AG04450 (cell line): ENCODE measurements at regions of chr10 and their contacts with region 1.

Region 1: DNA sequence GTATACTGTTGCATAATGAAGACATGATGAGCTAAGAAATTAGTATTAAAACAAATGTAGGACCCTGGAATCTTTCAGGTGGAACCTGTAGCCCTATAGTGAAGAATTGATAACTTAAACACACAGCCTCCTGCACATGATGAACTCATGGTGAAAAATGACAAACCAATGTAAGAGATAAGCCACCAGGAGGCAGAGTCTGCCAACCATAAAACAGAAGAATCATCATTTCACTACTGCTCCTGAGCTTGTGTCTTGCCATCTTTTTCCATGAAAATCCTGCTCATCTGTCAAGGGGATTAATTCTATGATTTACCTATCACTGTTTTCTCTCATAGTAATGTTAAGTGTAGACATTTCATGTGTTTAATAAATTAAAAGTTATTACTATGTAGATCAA is 363.9 kb downstream of the MALRD1 start:
- DNase-seq: peak; percentile 10
- H3K4me3 ChIP-seq: no peak overlapping the region
- H3K27ac ChIP-seq: no peak overlapping the region
- H3K27me3 ChIP-seq: no peaks in the 10 kb centered on the region
- CTCF ChIP-seq: peak; percentile 65

Region 2: GRCh38 chr10:18689498-18689897 is 723.0 kb before region 1 on chr10:
- CTCF ChIA-PET with region 1: interaction called, 16 read pairs
- POLR2A ChIA-PET with region 1: no interaction called
- DNase-seq: no peak
- H3K4me3 ChIP-seq: no peak overlapping the region
- H3K27ac ChIP-seq: no peak overlapping the region
- H3K27me3 ChIP-seq: no peaks in the 10 kb centered on the region
- CTCF ChIP-seq: peak; percentile 54

Region 3: DNA sequence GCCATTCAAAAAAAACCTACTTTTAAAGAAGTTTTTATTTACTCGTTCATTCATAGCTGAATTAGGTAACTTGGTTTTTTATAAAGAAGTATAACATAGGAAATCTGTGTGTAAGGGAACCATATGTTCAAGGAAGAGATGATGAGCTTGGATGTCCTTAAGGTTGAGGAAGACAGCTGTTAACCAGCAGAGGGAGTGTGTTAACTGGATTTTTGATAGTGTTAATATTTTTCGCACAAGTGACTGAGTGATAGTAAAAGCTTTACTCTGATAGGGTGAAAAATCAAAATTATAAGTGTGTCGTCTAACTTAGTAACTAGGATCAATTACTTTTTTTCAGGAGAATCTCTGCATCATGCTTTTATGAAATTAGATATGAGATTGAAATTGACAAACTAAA is 618.6 kb before region 1 on chr10:
- CTCF ChIA-PET with region 1: interaction called, 15 read pairs
- POLR2A ChIA-PET with region 1: no interaction called
- DNase-seq: peak; percentile 8
- H3K4me3 ChIP-seq: no peak overlapping the region
- H3K27ac ChIP-seq: no peak overlapping the region
- H3K27me3 ChIP-seq: no peaks in the 10 kb centered on the region
- CTCF ChIP-seq: peak; percentile 73

Region 4: GRCh38 chr10:19541299-19541698 is 128.8 kb after region 1 on chr10:
- CTCF ChIA-PET with region 1: no interaction called
- POLR2A ChIA-PET with region 1: no interaction called
- DNase-seq: no peak
- H3K4me3 ChIP-seq: no peak overlapping the region
- H3K27ac ChIP-seq: no peak overlapping the region
- H3K27me3 ChIP-seq: no peaks in the 10 kb centered on the region
- CTCF ChIP-seq: no peak

Region 5: GRCh38 chr10:19616966-19617365 is 204.4 kb after region 1 on chr10:
- CTCF ChIA-PET with region 1: no interaction called
- POLR2A ChIA-PET with region 1: no interaction called
- DNase-seq: no peak
- H3K4me3 ChIP-seq: no peak overlapping the region
- H3K27ac ChIP-seq: no peak overlapping the region
- H3K27me3 ChIP-seq: no peaks in the 10 kb centered on the region
- CTCF ChIP-seq: no peak

Region 6: GRCh38 chr10:19629567-19629966 is 217.0 kb after region 1 on chr10:
- CTCF ChIA-PET with region 1: interaction called, 11 read pairs
- POLR2A ChIA-PET with region 1: no interaction called
- DNase-seq: no peak
- H3K4me3 ChIP-seq: no peak overlapping the region
- H3K27ac ChIP-seq: no peak overlapping the region
- H3K27me3 ChIP-seq: no peaks in the 10 kb centered on the region
- CTCF ChIP-seq: peak; percentile 32; the same call in 1 of the 2 replicates

Region 7: GRCh38 chr10:19788075-19788686 is 375.6 kb after region 1 on chr10:
- CTCF ChIA-PET with region 1: interaction called, 52 read pairs
- POLR2A ChIA-PET with region 1: no interaction called
- DNase-seq: peak; percentile 32
- H3K4me3 ChIP-seq: no peak overlapping the region
- H3K27ac ChIP-seq: no peak overlapping the region
- H3K27me3 ChIP-seq: no peaks in the 10 kb centered on the region
- CTCF ChIP-seq: peak; percentile 97

Region 8: DNA sequence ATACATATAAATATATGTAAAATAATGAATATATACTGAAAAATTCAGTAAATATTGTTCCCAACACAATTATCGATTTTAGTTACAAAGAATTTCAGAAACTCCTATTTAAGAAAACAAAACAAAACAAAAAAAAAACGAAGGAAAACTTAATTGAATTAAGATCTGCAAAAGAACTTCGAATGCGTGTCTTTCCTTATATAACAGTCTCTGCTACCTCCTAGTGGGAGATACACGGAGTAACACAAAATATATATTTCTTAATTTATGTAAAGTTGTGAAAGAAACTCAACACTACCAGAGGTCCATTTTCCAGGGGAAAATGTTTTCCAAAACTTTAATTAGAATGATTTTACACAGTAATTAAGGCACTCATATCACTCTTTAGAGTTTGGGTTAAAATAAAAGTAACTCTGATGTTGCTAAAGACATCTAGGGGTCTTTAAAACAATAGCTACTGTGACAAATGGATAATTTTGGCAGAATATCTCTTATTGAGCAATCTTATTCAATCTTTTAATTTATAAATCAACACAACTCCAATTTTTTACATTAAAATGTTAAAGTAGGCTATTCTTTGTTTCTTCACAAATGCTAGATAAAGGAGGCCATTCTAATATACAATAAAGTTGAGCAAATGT is 1443.0 kb after region 1 on chr10:
- CTCF ChIA-PET with region 1: interaction called, 17 read pairs
- POLR2A ChIA-PET with region 1: no interaction called
- DNase-seq: peak; percentile 1
- H3K4me3 ChIP-seq: no peak overlapping the region
- H3K27ac ChIP-seq: no peak overlapping the region
- H3K27me3 ChIP-seq: no peaks in the 10 kb centered on the region
- CTCF ChIP-seq: peak; percentile 53